Endothelial cell of umbilical vein (primary cell): ENCODE measurements at regions of chr22 and their contacts with region 1.

Region 1: GRCh38 chr22:46515208-46516111 is 22.0 kb downstream of the CELSR1 start:
- DNase-seq: no peak
- H3K4me3 ChIP-seq: no peak overlapping the region
- H3K27ac ChIP-seq: no peak overlapping the region
- H3K4me1 ChIP-seq: peaks cover 14% of the 10 kb centered on the region
- H3K27me3 ChIP-seq: no peaks in the 10 kb centered on the region
- CTCF ChIP-seq: no peak
- POLR2A ChIP-seq: no peak

Region 2: GRCh38 chr22:46233231-46233630 is 282.2 kb before region 1 on chr22:
- CTCF ChIA-PET with region 1: no interaction called
- POLR2A ChIA-PET with region 1: no interaction called
- dilution Hi-C with region 1: no loop called
- intact Hi-C with region 1: no loop called
- DNase-seq: peak; percentile 21
- H3K4me3 ChIP-seq: no peak overlapping the region
- H3K27ac ChIP-seq: no peak overlapping the region
- H3K4me1 ChIP-seq: no peaks in the 10 kb centered on the region
- H3K27me3 ChIP-seq: no peaks in the 10 kb centered on the region
- CTCF ChIP-seq: no peak
- POLR2A ChIP-seq: no peak

Region 3: DNA sequence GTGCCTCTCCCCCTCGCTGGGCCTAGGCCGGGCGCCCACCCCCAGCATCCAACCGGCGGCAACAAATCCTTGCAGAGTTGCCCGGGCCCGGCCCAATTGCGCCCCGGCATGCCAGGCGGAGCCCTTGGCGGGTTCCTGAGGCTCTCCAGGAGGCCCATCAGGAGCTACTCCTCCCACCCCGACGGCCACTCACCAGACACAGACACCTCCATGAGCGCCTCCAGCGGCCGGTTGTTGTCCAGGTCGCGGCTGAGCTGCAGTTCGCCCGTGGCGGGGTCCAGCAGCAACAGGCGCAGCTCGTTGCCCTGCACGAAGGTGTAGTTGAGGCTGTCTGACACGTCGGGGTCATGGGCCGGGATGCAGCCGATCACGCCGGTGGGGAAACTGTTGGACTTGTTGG is 18.0 kb after region 1 on chr22:
- CTCF ChIA-PET with region 1: no interaction called
- POLR2A ChIA-PET with region 1: no interaction called
- dilution Hi-C with region 1: no loop called
- intact Hi-C with region 1: loop called (anchors 2 kb)
- DNase-seq: no peak
- H3K4me3 ChIP-seq: no peak overlapping the region
- H3K27ac ChIP-seq: no peak overlapping the region
- H3K4me1 ChIP-seq: peaks cover 5% of the 10 kb centered on the region
- H3K27me3 ChIP-seq: peaks cover 7 to 20% of the 10 kb centered on the region in 2 experiments
- CTCF ChIP-seq: no peak
- POLR2A ChIP-seq: no peak

Region 4: GRCh38 chr22:46638601-46639431 is 123.4 kb after region 1 on chr22:
- CTCF ChIA-PET with region 1: no interaction called
- POLR2A ChIA-PET with region 1: no interaction called
- dilution Hi-C with region 1: no loop called
- intact Hi-C with region 1: no loop called
- DNase-seq: no peak
- H3K4me3 ChIP-seq: no peak overlapping the region
- H3K27ac ChIP-seq: no peak overlapping the region
- H3K4me1 ChIP-seq: no peaks in the 10 kb centered on the region
- H3K27me3 ChIP-seq: no peaks in the 10 kb centered on the region
- CTCF ChIP-seq: no peak
- POLR2A ChIP-seq: no peak